Activated CD4-positive, alpha-beta T cell treated with anti-CD3 and anti-CD28 coated beads for 36 hours (primary cell): ENCODE measurements at regions of chr17 and their contacts with region 1.

Region 1: GRCh38 chr17:76397687-76398487 is 13.5 kb downstream of the SPHK1 start:
- DNase-seq: peak; percentile 92
- ATAC-seq: peak; percentile 92
- H3K4me3 Mint-ChIP-seq: no peak overlapping the region
- H3K27ac Mint-ChIP-seq: no peak overlapping the region
- H3K4me1 Mint-ChIP-seq: no peaks in the 10 kb centered on the region
- H3K27me3 Mint-ChIP-seq: no peaks in the 10 kb centered on the region

Region 2: GRCh38 chr17:76307299-76307965 is 90.5 kb before region 1 on chr17:
- CTCF ChIA-PET with region 1: interaction called, 89 read pairs
- POLR2A ChIA-PET with region 1: no interaction called
- intact Hi-C with region 1: loop called (anchors 1 kb)
- DNase-seq: no peak
- ATAC-seq: no peak
- H3K4me3 Mint-ChIP-seq: no peak overlapping the region
- H3K27ac Mint-ChIP-seq: no peak overlapping the region
- H3K4me1 Mint-ChIP-seq: no peaks in the 10 kb centered on the region
- H3K27me3 Mint-ChIP-seq: no peaks in the 10 kb centered on the region

Region 3: DNA sequence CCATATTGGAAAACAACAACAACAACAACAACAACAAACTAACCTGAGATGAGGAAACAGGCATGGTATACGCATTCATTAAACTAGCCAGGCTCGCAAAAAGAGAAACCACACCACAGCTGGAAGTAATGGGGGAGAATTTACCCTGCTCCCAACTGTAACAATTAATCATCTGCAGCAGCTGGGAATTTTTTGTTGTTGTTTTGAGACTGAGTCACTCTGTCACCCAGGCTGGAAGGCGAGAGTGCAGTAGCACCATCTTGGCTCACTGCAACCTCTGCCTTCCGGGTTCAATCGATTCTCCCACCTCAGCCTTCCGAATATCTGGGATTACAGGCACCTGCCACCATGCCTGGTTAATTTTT is 60.5 kb before region 1 on chr17:
- CTCF ChIA-PET with region 1: interaction called, 12 read pairs
- POLR2A ChIA-PET with region 1: no interaction called
- intact Hi-C with region 1: no loop called
- DNase-seq: no peak
- ATAC-seq: no peak
- H3K4me3 Mint-ChIP-seq: no peak overlapping the region
- H3K27ac Mint-ChIP-seq: no peak overlapping the region
- H3K4me1 Mint-ChIP-seq: no peaks in the 10 kb centered on the region
- H3K27me3 Mint-ChIP-seq: no peaks in the 10 kb centered on the region

Region 4: GRCh38 chr17:76370261-76370993 is 27.5 kb before region 1 on chr17:
- CTCF ChIA-PET with region 1: interaction called, 12 read pairs
- POLR2A ChIA-PET with region 1: no interaction called
- intact Hi-C with region 1: no loop called
- DNase-seq: peak; percentile 35
- ATAC-seq: no peak
- H3K4me3 Mint-ChIP-seq: no peak overlapping the region
- H3K27ac Mint-ChIP-seq: no peak overlapping the region
- H3K4me1 Mint-ChIP-seq: peaks cover 4% of the 10 kb centered on the region
- H3K27me3 Mint-ChIP-seq: no peaks in the 10 kb centered on the region

Region 5: DNA sequence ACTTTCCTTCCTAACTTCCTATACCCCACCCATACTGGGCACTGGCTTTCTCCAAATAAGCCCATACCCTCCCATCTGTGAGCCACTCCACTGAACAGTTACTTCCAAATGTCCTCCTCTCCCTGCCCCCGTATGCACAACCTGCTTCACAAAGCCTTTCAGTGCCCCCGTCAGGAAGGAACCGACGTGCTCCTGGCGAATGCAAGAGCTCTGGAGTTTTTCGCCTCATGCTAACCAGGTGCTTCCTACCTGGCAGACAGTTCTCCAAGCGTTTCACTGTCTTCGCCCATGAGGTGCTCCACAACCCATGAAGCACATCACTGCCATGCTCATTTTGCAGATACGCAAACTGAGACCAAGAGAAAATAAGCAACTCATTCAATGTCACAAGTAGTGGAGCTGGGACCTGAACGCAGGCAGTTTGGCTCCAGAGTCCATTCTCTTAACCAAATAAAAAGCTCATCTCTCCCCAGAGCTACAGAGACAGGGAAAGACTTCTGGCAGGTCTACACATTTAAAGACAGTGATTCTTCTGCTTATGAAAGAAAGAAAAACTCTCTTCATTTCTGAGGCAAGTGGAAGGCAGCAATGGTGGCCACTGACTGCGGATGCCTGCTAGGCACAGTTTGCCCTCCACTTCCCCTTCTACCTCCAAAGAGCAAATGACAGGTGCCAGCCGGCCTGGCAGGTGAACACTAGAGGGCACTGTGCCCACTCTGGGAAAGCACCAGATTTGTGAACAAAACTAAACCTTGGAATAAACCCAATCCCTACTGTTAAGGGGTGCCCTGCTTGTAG is 10.4 kb after region 1 on chr17:
- CTCF ChIA-PET with region 1: interaction called, 34 read pairs
- POLR2A ChIA-PET with region 1: no interaction called
- intact Hi-C with region 1: no loop called
- DNase-seq: peak; percentile 84
- ATAC-seq: peak; percentile 90
- H3K4me3 Mint-ChIP-seq: no peak overlapping the region
- H3K27ac Mint-ChIP-seq: no peak overlapping the region
- H3K4me1 Mint-ChIP-seq: peaks cover 8% of the 10 kb centered on the region
- H3K27me3 Mint-ChIP-seq: no peaks in the 10 kb centered on the region

Region 6: DNA sequence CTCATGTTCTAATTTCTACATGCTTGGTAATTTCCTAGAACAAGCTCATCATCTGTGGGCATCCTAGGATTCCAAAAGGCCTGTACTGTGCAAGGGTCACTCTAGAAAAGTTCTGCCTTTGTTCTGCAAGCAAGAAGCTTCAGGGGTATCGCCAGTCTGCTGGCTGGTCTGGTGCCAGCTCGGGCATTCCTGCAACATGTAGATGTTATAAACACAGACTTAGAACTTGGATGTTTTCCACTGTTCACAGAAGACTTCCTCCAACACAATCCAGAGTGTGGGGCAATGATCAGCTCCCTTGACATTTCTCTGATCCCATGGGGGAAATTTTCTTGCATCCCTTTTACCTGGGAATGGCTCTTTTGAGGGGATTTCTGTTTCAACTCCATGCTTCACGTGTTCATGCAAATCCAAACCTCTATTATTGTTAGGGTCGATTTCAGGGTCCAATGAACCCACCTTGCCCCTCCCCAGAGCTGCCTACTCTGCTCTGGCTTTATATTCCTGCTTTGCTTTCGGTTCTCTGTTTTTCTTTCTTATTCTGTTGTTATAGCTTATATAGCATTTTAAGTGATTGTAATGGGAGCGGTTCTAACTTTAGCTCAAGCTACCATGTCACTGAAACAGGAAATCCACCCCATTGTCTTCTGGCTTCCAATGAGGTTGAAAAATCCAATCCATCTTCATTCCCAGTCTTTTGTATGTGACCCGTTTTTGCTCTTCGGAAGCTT is 29.8 kb after region 1 on chr17:
- CTCF ChIA-PET with region 1: interaction called, 11 read pairs
- POLR2A ChIA-PET with region 1: no interaction called
- intact Hi-C with region 1: no loop called
- DNase-seq: no peak
- ATAC-seq: no peak
- H3K4me3 Mint-ChIP-seq: no peak overlapping the region
- H3K27ac Mint-ChIP-seq: no peak overlapping the region
- H3K4me1 Mint-ChIP-seq: peaks cover 10% of the 10 kb centered on the region
- H3K27me3 Mint-ChIP-seq: no peaks in the 10 kb centered on the region

Region 7: GRCh38 chr17:76540381-76541300 is 142.8 kb after region 1 on chr17:
- CTCF ChIA-PET with region 1: no interaction called
- POLR2A ChIA-PET with region 1: no interaction called
- intact Hi-C with region 1: no loop called
- DNase-seq: peak; percentile 63
- ATAC-seq: peak; percentile 78
- H3K4me3 Mint-ChIP-seq: no peak overlapping the region
- H3K27ac Mint-ChIP-seq: no peak overlapping the region
- H3K4me1 Mint-ChIP-seq: no peaks in the 10 kb centered on the region
- H3K27me3 Mint-ChIP-seq: peaks cover 42% of the 10 kb centered on the region